HCT116 (cell line): ENCODE measurements at regions of chr19 and their contacts with region 1.

Region 1: DNA sequence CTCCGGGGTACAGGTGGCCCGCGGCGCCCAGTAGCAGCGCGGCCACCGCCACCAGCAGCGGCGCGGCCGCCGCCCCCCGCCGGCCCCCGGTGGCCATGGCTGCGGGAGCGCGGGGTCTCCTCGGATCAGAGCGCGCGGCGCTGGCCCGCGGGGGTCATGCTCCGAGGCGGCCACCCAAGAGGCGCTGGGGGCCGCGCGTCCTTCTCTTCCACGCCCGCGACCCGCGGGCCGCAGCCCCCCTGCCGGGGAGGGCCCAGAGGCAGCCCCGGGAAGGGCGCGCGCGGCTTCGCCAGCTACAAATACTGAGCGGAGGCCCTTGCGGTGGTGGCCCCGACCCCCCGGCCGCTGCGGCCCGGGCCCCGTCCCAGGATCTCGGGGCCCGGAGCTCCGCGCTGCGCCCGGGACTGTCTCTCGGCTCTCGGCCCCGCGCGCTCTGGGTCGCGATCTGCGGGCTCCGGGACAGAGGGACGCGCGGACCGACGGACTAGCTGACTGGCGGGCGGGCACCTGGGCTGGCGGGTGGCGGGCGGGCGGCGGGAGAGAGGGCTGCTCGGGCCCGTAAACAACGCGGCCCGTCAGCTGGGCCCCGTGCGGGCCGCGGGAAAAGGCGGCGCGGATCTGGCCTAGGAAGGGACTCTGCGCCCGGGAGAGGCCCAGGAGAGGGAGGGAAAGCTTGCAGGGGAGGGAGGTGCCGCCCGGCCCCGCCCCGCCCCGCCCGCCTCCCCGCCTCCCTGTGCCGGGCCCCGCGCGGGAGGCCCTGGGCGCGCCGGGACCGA is at the start of gene INSR:
- DNase-seq: peak; percentile 75
- ATAC-seq: peak; percentile 91
- H3K4me3 ChIP-seq: peak within 1 kb of the TSS; percentile 65 to 69
- H3K27ac ChIP-seq: peak within 1 kb of the TSS; percentile 70
- H3K4me1 ChIP-seq: peaks cover 10 to 21% of the 10 kb centered on the region in 2 experiments; a peak in 3 of 4 replicates
- H3K27me3 ChIP-seq: no peaks in the 10 kb centered on the region
- CTCF ChIP-seq: no peak
- POLR2A ChIP-seq: no peak
- RAD21 ChIP-seq: no peak
- total RNA-seq, gene INSR: 25.4 TPM

Region 2: DNA sequence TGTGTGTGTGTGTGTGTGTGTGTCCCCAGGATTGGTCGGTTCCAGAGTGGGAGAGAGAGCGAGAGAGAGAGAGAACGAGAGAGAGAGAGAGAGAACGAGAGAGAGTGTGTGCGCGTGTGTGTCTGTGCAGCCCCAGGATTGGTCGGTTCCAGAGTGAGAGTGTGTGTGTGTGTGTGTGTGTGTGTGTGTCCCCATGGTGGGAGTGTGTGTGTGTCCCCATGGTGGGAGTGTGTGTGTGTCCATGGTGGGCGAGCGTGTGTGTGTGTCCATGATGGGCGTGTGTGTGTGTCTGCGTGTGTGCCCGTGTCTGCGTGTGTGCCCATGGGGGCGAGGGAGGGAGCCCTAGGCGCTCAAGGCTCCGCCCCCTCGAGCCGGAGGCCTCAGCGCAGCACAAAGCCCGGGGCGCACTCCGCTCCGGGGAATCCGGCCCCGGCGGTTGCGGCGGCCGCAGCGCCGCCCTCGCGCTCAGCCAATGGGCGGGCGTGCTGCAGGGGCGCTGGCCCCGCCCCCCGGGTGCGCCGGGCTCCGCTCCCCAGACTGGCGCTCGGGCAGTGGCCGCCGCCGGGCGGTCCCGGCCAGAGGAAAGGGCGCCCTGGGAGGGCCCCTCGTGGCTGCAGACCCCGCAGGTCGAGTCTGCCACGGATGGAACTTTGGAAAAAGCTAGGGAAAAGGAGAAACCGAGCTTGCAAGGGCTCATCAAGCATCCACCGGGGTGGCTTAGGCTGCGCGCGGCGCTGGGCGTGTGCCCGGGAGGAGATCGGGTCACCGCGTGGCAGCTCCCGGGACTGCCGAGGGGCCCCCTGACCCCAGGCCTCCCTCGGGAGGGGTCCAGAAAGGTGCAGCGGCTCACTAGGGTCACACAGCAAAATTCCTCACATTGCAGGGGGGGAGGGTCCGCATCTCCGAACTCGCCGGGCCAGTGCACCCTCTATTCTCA is 96.0 kb before region 1 on chr19:
- CTCF ChIA-PET with region 1: interaction called, 4 read pairs
- POLR2A ChIA-PET with region 1: interaction called, 13 read pairs
- RAD21 ChIA-PET with region 1: no interaction called
- intact Hi-C with region 1: loop called (anchors 1 kb)
- DNase-seq: peak; percentile 84
- ATAC-seq: peak; percentile 86
- H3K4me3 ChIP-seq: peak overlapping the region; percentile 67 to 76
- H3K27ac ChIP-seq: peak overlapping the region; percentile 73
- H3K4me1 ChIP-seq: peaks cover 25 to 47% of the 10 kb centered on the region in 2 experiments
- H3K27me3 ChIP-seq: no peaks in the 10 kb centered on the region
- CTCF ChIP-seq: 0 out of 6 replicates have a peak, but pooled peaks of 1 of the 3 experiments have one; percentile 17
- POLR2A ChIP-seq: peak; percentile 91
- RAD21 ChIP-seq: 0 out of 2 replicates have a peak, but pooled peaks have one; percentile 8